ENCODE measurements at regions of chr9 and their contacts with region 1.

Region 1: DNA sequence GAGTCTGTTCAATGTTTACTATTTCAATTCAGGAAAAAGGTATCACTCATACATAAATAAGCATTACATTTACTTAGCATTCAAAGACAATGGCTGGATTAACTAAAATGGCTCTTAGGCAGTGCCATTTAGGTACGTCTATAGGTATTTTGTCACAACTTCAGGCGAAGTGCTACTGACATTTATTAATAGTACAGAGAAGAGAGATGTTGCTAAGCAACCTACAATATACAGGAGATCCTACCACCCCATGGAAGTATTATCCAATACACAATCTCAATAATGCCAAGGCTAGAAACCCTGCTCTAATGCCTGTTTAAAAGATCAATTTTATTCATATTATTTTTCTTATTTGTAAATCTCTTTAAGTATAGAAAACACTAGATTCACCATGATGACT is 76.0 kb downstream of the UBAP2 start:
- DNase-seq: no peak
- ATAC-seq: peak in 1 of 4 donors; percentile 79
- H3K4me3 ChIP-seq: no peak overlapping the region
- H3K27ac ChIP-seq: no peak overlapping the region
- H3K4me1 ChIP-seq: peaks cover 0 to 16% (median 0%) of the 10 kb centered on the region in 12 donors
- H3K27me3 ChIP-seq: no peaks in the 10 kb centered on the region
- CTCF ChIP-seq: no peak
- POLR2A ChIP-seq: no peak

Region 2: DNA sequence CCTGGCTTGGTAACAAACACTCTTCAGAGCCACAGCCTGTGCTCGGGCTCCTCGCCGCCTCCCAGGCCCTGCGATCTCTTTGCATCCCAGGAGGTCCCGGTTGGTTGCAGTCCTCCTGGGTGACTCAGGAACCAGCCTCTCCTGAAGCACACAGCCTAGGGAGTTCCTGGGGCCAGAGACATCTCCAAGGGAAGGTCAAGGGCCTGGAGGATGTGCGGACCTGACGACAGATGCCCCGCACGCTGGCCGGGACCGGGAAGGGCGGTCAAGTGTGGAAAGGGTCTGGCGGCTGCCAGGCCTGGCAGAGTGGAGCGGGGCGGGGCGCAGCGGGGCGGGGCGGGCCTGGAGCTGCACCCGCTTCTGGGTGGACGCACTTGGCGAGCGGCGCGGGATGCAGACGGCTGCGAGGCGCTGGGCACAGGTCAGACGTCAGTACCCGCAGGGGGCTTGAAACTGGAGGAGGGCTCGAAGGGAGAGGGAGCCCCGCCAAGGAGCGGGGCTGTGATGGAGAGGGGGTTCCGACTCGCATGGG is 222.3 kb before region 1 on chr9:
- intact Hi-C with region 1: no loop called
- DNase-seq: peak in 1 of 5 donors; percentile 10
- ATAC-seq: peak in 3 of 4 donors; percentile 54 to 82 (median 74)
- H3K4me3 ChIP-seq: peak overlapping the region in 3 of 12 donors; percentile 6 to 31 (median 17)
- H3K27ac ChIP-seq: no peak overlapping the region
- H3K4me1 ChIP-seq: peaks cover 0 to 12% (median 1%) of the 10 kb centered on the region in 12 donors
- H3K27me3 ChIP-seq: peaks cover 0 to 52% (median 15%) of the 10 kb centered on the region in 9 donors
- CTCF ChIP-seq: no peak
- POLR2A ChIP-seq: no peak

Region 3: GRCh38 chr9:33932078-33932807 is 40.5 kb before region 1 on chr9:
- intact Hi-C with region 1: loop called in 1 of 10 experiments (anchors 5 kb)
- DNase-seq: no peak
- ATAC-seq: peak in 2 of 4 donors; percentile 6 to 18
- H3K4me3 ChIP-seq: no peak overlapping the region
- H3K27ac ChIP-seq: no peak overlapping the region
- H3K4me1 ChIP-seq: peaks cover 0 to 12% (median 0%) of the 10 kb centered on the region in 12 donors
- H3K27me3 ChIP-seq: no peaks in the 10 kb centered on the region
- CTCF ChIP-seq: no peak
- POLR2A ChIP-seq: no peak

Measured in heart left ventricle (tissue), 16 donors.